ENCODE measurements at regions of chr16 and their contacts with region 1.

Region 1: GRCh38 chr16:30649725-30650368 is 913 bp upstream of the PRR14 start:
- DNase-seq: no peak
- H3K4me3 ChIP-seq: peak overlapping the region; percentile 19 to 97 (median 80)
- H3K27ac ChIP-seq: peak overlapping the region; percentile 97 to 100 (median 98)
- H3K4me1 ChIP-seq: peaks cover 4 to 22% (median 17%) of the 10 kb centered on the region in 4 donors
- H3K27me3 ChIP-seq: no peaks in the 10 kb centered on the region
- CTCF ChIP-seq: no peak
- EP300 ChIP-seq: no peak
- POLR2A ChIP-seq: no peak

Region 2: DNA sequence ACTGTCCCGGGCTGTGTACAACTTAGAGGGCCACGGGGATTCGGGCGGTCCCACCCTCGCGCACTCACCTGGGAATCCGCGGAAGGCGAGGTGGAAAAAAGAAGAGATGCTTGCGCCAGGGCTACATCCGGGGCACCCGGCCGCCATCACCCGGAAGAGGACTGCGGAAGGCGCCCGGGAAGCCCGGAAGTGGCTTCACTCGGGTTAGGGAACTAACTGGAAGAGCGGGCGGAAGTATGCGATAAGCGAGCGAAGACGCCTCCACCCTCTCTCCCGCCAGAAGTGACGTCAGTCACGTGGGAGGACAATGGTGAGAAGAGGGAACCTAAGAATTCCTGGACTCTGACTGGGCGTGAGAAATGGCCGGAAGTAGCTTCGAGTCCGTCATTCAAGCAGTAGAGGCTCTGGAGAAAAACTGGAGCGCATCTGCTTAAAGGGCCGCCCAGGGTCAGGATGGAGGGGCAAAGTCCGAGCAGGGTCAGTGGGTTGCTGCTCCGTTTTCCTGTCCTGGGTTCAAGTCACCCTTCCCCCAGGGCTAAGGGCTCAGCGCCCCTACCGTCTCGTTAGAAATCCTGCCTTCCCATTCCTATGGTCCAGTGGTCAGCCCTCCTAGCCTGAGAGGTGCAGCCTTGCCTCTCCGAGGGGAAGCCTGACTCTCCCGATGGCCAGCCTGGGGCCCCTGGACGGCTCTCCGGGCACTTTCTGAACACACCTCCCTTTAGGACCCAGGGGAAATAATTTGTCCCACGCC is 294.5 kb before region 1 on chr16 and contains the start of gene CD2BP2:
- in situ Hi-C with region 1: no loop called
- intact Hi-C with region 1: no loop called
- DNase-seq: peak; percentile 98
- H3K4me3 ChIP-seq: peak within 1 kb of the TSS; percentile 65 to 94 (median 86)
- H3K27ac ChIP-seq: peak within 1 kb of the TSS; percentile 88 to 99 (median 96)
- H3K4me1 ChIP-seq: peaks cover 28 to 49% (median 32%) of the 10 kb centered on the region in 4 donors
- H3K27me3 ChIP-seq: no peaks in the 10 kb centered on the region
- CTCF ChIP-seq: peak in 1 of 5 experiments; percentile 26
- EP300 ChIP-seq: peak; percentile 37
- POLR2A ChIP-seq: peak; percentile 11
- total RNA-seq, gene CD2BP2: 25.8 to 41.1 (median 33.0) TPM

Region 3: DNA sequence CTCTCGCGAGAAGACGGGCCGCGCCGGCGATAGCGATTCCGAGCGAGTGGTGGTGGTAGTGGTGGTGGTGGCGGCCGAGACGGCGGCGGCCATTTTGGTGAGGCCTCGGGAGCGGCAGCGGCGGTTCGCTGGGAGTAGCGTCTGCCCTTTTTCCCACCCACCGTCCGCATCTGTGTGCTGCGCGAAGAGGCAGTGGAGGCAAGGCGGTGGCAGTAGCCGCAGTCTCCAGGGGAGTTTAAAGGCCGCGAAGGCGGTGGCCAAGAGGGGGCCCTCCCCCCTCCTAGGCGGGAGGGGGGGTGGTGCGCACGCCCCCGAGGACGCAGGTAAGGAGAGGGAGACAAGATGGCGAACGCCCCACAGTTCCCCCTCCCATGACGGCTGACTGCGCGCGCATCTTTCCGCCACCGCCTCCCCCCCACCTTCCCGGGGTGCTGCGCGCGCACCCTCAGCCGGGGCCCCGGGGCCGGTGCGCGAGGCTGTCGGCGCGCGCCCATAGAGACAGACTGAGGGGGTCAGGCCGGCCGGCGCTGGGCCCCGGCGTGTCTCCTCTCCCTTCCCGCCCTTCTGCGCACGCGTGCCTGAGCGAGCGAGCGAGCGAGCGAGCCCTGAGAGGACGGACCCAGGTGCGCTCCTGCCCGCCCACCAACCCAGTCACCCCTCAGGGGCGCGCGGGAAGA is 48.4 kb after region 1 on chr16:
- in situ Hi-C with region 1: loop called in 1 of 4 experiments (anchors 10 kb)
- intact Hi-C with region 1: no loop called
- DNase-seq: peak; percentile 99
- H3K4me3 ChIP-seq: peak overlapping the region; percentile 79 to 96 (median 86)
- H3K27ac ChIP-seq: peak overlapping the region; percentile 98 to 100 (median 99)
- H3K4me1 ChIP-seq: peaks cover 9 to 24% (median 14%) of the 10 kb centered on the region in 4 donors
- H3K27me3 ChIP-seq: no peaks in the 10 kb centered on the region
- CTCF ChIP-seq: no peak
- EP300 ChIP-seq: no peak
- POLR2A ChIP-seq: peak; percentile 94